ENCODE measurements at regions of chr2 and their contacts with region 1.

Region 1: DNA sequence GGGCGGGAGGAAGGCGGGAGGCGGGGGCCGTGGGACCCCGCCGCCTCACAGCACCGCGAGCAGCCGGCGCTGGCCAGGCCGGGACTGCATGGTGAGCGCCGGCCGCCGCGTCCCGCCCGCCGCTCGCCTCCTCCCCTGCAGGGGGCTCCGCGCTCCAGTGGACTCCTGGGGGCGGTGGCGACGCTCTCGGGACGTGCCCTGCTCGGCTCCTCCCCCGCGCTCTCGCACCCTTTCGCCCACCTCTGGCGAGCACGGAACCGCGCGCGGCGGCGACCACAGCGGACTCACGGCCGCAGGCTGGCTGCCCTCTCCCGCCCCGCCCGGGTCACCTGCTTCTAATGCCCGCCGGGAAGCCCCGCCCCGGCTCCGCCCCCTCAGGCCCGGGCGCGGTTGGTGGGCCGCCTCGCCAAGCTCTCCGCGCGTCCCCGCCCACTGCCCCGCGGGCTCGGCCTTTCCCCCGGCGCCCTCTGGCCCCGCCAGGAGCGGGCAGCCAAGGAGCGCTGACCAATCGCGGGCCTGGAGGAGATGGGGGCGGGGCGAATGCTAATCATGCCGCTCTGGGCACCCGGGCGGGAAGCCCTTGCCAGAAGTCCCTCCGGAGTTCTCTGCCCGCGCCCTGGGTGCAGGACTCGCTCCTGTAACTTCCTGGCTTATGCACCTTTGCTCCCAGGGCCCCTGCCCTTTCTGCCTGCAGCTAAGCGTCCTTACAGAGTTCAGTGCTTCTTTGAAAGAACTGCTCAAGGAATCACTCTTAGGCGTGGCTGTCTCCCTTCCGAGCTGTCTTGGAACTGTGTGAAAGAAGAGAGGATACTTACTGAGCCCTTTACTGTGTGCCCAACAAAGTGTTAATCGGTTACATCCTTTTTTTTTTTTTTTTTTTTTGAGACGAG is at the start of gene FZD5:
- DNase-seq: peak; percentile 91
- H3K4me3 ChIP-seq: peak within 1 kb of the TSS; percentile 66 to 80 (median 67)
- H3K27ac ChIP-seq: no peak within 1 kb of the TSS
- H3K4me1 ChIP-seq: peaks cover 16% of the 10 kb centered on the region
- H3K27me3 ChIP-seq: no peaks in the 10 kb centered on the region
- CTCF ChIP-seq: peak; percentile 51 to 72
- POLR2A ChIP-seq: no peak
- total RNA-seq, gene FZD5: 2.8 and 3.3 TPM in 2 replicates

Region 2: GRCh38 chr2:207619764-207620203 is 150.1 kb before region 1 on chr2:
- CTCF ChIA-PET with region 1: no interaction called
- POLR2A ChIA-PET with region 1: no interaction called
- dilution Hi-C with region 1: no loop called
- intact Hi-C with region 1: no loop called
- DNase-seq: peak; percentile 43
- H3K4me3 ChIP-seq: no peak overlapping the region
- H3K27ac ChIP-seq: no peak overlapping the region
- H3K4me1 ChIP-seq: peaks cover 22% of the 10 kb centered on the region
- H3K27me3 ChIP-seq: no peaks in the 10 kb centered on the region
- CTCF ChIP-seq: no peak
- POLR2A ChIP-seq: no peak

Region 3: GRCh38 chr2:207792244-207792785 is 22.5 kb after region 1 on chr2:
- CTCF ChIA-PET with region 1: interaction called, 7 read pairs
- POLR2A ChIA-PET with region 1: no interaction called
- dilution Hi-C with region 1: no loop called
- intact Hi-C with region 1: loop called (anchors 1 kb)
- DNase-seq: peak; percentile 75
- H3K4me3 ChIP-seq: no peak overlapping the region
- H3K27ac ChIP-seq: peak overlapping the region; percentile 98
- H3K4me1 ChIP-seq: peaks cover 10% of the 10 kb centered on the region
- H3K27me3 ChIP-seq: no peaks in the 10 kb centered on the region
- CTCF ChIP-seq: no peak
- POLR2A ChIP-seq: peak; percentile 47

Region 4: GRCh38 chr2:207926133-207926988 is 156.5 kb after region 1 on chr2:
- CTCF ChIA-PET with region 1: no interaction called
- POLR2A ChIA-PET with region 1: no interaction called
- dilution Hi-C with region 1: no loop called
- intact Hi-C with region 1: loop called (anchors 1 kb)
- DNase-seq: peak; percentile 59
- H3K4me3 ChIP-seq: no peak overlapping the region
- H3K27ac ChIP-seq: no peak overlapping the region
- H3K4me1 ChIP-seq: peaks cover 7% of the 10 kb centered on the region
- H3K27me3 ChIP-seq: no peaks in the 10 kb centered on the region
- CTCF ChIP-seq: no peak
- POLR2A ChIP-seq: no peak

Region 5: GRCh38 chr2:207993151-207993763 is 223.4 kb after region 1 on chr2:
- CTCF ChIA-PET with region 1: no interaction called
- POLR2A ChIA-PET with region 1: no interaction called
- dilution Hi-C with region 1: no loop called
- intact Hi-C with region 1: no loop called
- DNase-seq: no peak
- H3K4me3 ChIP-seq: no peak overlapping the region
- H3K27ac ChIP-seq: no peak overlapping the region
- H3K4me1 ChIP-seq: no peaks in the 10 kb centered on the region
- H3K27me3 ChIP-seq: no peaks in the 10 kb centered on the region
- CTCF ChIP-seq: no peak
- POLR2A ChIP-seq: no peak

Region 6: DNA sequence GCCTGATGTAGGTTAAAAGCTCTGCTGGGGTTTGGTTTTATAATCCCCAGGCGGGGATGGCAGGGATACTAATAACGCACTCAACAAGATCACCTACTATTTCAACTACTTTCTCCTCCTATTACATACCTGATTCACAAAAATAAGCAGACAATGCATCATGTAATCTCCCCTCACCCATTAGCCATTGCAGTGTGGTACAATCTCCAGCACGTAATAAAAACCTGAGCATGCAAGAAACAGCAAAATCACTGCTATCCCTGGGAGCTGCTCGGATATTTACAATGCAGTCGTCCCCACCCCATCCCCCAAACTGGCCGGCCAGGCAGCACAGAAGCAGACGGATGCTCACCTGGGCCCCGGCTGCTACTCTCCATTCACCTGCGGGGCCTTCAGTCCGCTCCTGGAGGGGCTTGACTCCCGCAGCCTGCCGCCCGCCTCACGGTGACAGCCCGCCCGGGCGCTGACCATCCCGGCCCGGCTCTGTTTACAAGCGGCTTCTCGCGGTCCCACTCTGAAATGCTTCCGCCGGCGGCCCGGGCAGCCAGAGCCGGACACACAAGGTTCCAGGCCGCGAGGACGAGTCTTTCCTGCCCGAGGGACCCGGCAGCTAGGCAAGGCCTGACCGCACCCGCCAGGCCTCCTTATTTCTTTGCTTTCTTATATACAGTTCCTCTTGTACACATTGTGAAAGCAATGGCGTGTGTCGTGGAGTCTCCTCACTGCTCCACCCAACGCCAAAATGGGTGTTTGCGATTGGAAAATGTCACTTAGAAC is 255.4 kb after region 1 on chr2 and contains the start of gene PLEKHM3:
- CTCF ChIA-PET with region 1: interaction called, 5 read pairs
- POLR2A ChIA-PET with region 1: interaction called, 4 read pairs
- dilution Hi-C with region 1: no loop called
- intact Hi-C with region 1: loop called (anchors 2 kb)
- DNase-seq: peak; percentile 87
- H3K4me3 ChIP-seq: peak within 1 kb of the TSS; percentile 74 to 96 (median 94)
- H3K27ac ChIP-seq: peak within 1 kb of the TSS; percentile 45
- H3K4me1 ChIP-seq: peaks cover 12% of the 10 kb centered on the region
- H3K27me3 ChIP-seq: peaks cover 0 to 1% of the 10 kb centered on the region in 2 experiments
- CTCF ChIP-seq: no peak
- POLR2A ChIP-seq: peak; percentile 82
- total RNA-seq, gene PLEKHM3: 8.5 and 9.1 TPM in 2 replicates

Region 7: DNA sequence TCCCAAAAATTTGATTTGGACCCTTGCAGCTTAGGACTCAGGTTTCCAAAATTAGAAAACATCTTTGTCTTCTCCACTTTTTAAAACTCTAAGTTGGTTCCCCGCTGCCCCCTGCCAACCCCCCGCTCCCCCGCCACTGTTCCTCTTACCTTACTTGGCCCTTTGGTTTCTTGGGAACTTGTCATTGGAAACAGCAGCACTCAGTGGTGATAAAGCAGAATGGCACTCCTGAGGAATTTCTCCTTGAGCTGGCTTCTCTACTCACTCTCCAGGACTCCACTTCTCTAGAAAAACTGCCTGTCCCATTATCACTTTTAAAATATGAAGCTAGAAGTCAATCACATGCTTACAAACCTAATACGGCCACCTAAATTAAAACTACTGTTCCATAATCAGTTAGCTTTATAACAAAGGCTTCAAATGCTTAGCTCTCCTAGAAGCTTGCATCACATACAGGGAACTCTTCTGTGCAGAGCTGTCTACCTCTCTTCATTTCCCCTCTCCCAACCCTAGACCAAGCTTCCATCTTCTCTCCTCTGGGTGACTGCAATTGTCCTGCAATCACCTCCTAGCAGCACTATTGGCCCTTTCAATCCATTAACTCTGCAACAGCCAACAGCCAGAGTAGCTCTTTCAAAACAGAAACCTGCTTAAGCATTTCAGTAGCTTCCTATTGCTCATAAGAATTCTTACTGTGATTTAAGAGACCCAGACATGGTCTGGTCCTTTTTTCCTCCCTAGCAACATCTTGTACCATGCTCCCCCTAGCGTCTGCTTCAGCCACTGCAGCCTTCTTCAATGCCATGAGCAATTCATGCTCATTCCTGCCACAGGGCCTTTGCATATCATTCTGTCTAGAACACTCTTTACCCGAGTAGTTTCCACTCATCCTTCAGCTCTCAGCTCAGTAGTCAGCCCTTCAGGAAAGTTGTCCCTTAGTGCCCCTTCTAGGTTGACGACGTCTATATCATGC is 270.6 kb after region 1 on chr2:
- CTCF ChIA-PET with region 1: interaction called, 35 read pairs
- POLR2A ChIA-PET with region 1: no interaction called
- dilution Hi-C with region 1: no loop called
- intact Hi-C with region 1: loop called (anchors 1 kb)
- DNase-seq: peak; percentile 63
- H3K4me3 ChIP-seq: no peak overlapping the region
- H3K27ac ChIP-seq: no peak overlapping the region
- H3K4me1 ChIP-seq: no peaks in the 10 kb centered on the region
- H3K27me3 ChIP-seq: peaks cover 0 to 3% of the 10 kb centered on the region in 2 experiments
- CTCF ChIP-seq: peak; percentile 74 to 84
- POLR2A ChIP-seq: no peak

Region 8: GRCh38 chr2:208072250-208072892 is 302.5 kb after region 1 on chr2:
- CTCF ChIA-PET with region 1: interaction called, 4 read pairs
- POLR2A ChIA-PET with region 1: no interaction called
- dilution Hi-C with region 1: no loop called
- intact Hi-C with region 1: loop called (anchors 1 kb)
- DNase-seq: peak; percentile 77
- H3K4me3 ChIP-seq: no peak overlapping the region
- H3K27ac ChIP-seq: no peak overlapping the region
- H3K4me1 ChIP-seq: no peaks in the 10 kb centered on the region
- H3K27me3 ChIP-seq: peaks cover 3 to 8% of the 10 kb centered on the region in 2 experiments
- CTCF ChIP-seq: peak; percentile 80 to 84
- POLR2A ChIP-seq: no peak

Region 9: GRCh38 chr2:208792766-208793165 is 1022.9 kb after region 1 on chr2:
- CTCF ChIA-PET with region 1: no interaction called
- POLR2A ChIA-PET with region 1: no interaction called
- dilution Hi-C with region 1: no loop called
- intact Hi-C with region 1: no loop called
- DNase-seq: no peak
- H3K4me3 ChIP-seq: no peak overlapping the region
- H3K27ac ChIP-seq: no peak overlapping the region
- H3K4me1 ChIP-seq: no peaks in the 10 kb centered on the region
- H3K27me3 ChIP-seq: no peaks in the 10 kb centered on the region
- CTCF ChIP-seq: no peak
- POLR2A ChIP-seq: no peak

Measured in endothelial cell of umbilical vein (primary cell).